T-cell (primary cell): ENCODE measurements at regions of chr14 and their contacts with region 1.

Region 1: GRCh38 chr14:31207755-31208545 is at the start of gene HECTD1:
- DNase-seq: peak in 34 of 35 experiments; percentile 78 to 95 (median 87)
- ATAC-seq: peak; percentile 75 to 84 (median 79)
- H3K4me3 ChIP-seq: peak within 1 kb of the TSS; percentile 75 to 90
- H3K4me3 Mint-ChIP-seq: peak within 1 kb of the TSS; percentile 91 to 96 (median 92)
- H3K27ac ChIP-seq: peak within 1 kb of the TSS; percentile 96
- H3K27ac Mint-ChIP-seq: peak within 1 kb of the TSS; percentile 99
- H3K4me1 ChIP-seq: peaks cover 23 to 33% of the 10 kb centered on the region in 2 experiments
- H3K4me1 Mint-ChIP-seq: peaks cover 50 to 65% (median 63%) of the 10 kb centered on the region in 3 donors
- H3K27me3 ChIP-seq: no peaks in the 10 kb centered on the region
- H3K27me3 Mint-ChIP-seq: no peaks in the 10 kb centered on the region
- total RNA-seq, gene HECTD1: 118 to 194 (median 132) TPM

Region 2: GRCh38 chr14:31196839-31197492 is 11.0 kb before region 1 on chr14:
- CTCF ChIA-PET with region 1: interaction called in 1 of 2 experiments, 3 read pairs
- POLR2A ChIA-PET with region 1: interaction called, 3 to 17 read pairs
- DNase-seq: no peak
- ATAC-seq: no peak
- H3K4me3 ChIP-seq: no peak overlapping the region
- H3K4me3 Mint-ChIP-seq: no peak overlapping the region
- H3K27ac ChIP-seq: no peak overlapping the region
- H3K27ac Mint-ChIP-seq: no peak overlapping the region
- H3K4me1 ChIP-seq: peaks cover 2 to 7% of the 10 kb centered on the region in 2 experiments
- H3K4me1 Mint-ChIP-seq: peaks cover 49 to 62% (median 58%) of the 10 kb centered on the region in 3 donors
- H3K27me3 ChIP-seq: no peaks in the 10 kb centered on the region
- H3K27me3 Mint-ChIP-seq: no peaks in the 10 kb centered on the region